ENCODE measurements at regions of chr22 and their contacts with region 1.

Region 1: GRCh38 chr22:36757668-36758211 is 18.2 kb downstream of the IFT27 start:
- DNase-seq: peak; percentile 81
- H3K4me3 Mint-ChIP-seq: no peak overlapping the region
- H3K27ac Mint-ChIP-seq: no peak overlapping the region
- H3K4me1 Mint-ChIP-seq: no peaks in the 10 kb centered on the region
- H3K27me3 Mint-ChIP-seq: peaks cover 12% of the 10 kb centered on the region

Region 2: GRCh38 chr22:36775964-36776669 is 18.4 kb after region 1 on chr22 and contains the start of gene IFT27:
- CTCF ChIA-PET with region 1: interaction called, 44 read pairs
- POLR2A ChIA-PET with region 1: interaction called, 3 read pairs
- DNase-seq: peak; percentile 98
- H3K4me3 Mint-ChIP-seq: peak within 1 kb of the TSS; percentile 85
- H3K27ac Mint-ChIP-seq: peak within 1 kb of the TSS; percentile 77
- H3K4me1 Mint-ChIP-seq: peaks cover 34% of the 10 kb centered on the region
- H3K27me3 Mint-ChIP-seq: no peaks in the 10 kb centered on the region
- total RNA-seq, gene IFT27: 28.3 to 29.5 TPM

Measured in activated CD4-positive, alpha-beta memory T cell treated with anti-CD3 and anti-CD28 coated beads, Interleukin-2, amount 10 ng/mL, durations not matched to agents 7 days and 5 days (primary cell).